CD8-positive, alpha-beta T cell (primary cell): ENCODE measurements at regions of chr1 and their contacts with region 1.

Region 1: GRCh38 chr1:31663622-31664452 is 19.2 kb upstream of the PEF1 start:
- DNase-seq: peak; percentile 18 to 79 (median 59)
- ATAC-seq: peak; percentile 72
- H3K4me3 ChIP-seq: no peak overlapping the region
- H3K4me3 Mint-ChIP-seq: no peak overlapping the region
- H3K27ac ChIP-seq: no peak overlapping the region
- H3K27ac Mint-ChIP-seq: no peak overlapping the region
- H3K4me1 ChIP-seq: no peaks in the 10 kb centered on the region
- H3K4me1 Mint-ChIP-seq: no peaks in the 10 kb centered on the region
- H3K27me3 ChIP-seq: no peaks in the 10 kb centered on the region
- H3K27me3 Mint-ChIP-seq: peaks cover 3% of the 10 kb centered on the region
- CTCF ChIP-seq: peak; percentile 70

Region 2: GRCh38 chr1:30579580-30579979 is 1084.3 kb before region 1 on chr1:
- CTCF ChIA-PET with region 1: no interaction called
- POLR2A ChIA-PET with region 1: no interaction called
- intact Hi-C with region 1: no loop called
- DNase-seq: no peak
- ATAC-seq: no peak
- H3K4me3 ChIP-seq: no peak overlapping the region
- H3K4me3 Mint-ChIP-seq: no peak overlapping the region
- H3K27ac ChIP-seq: no peak overlapping the region
- H3K27ac Mint-ChIP-seq: no peak overlapping the region
- H3K4me1 ChIP-seq: no peaks in the 10 kb centered on the region
- H3K4me1 Mint-ChIP-seq: no peaks in the 10 kb centered on the region
- H3K27me3 ChIP-seq: no peaks in the 10 kb centered on the region
- H3K27me3 Mint-ChIP-seq: peaks cover 10% of the 10 kb centered on the region
- CTCF ChIP-seq: no peak

Region 3: DNA sequence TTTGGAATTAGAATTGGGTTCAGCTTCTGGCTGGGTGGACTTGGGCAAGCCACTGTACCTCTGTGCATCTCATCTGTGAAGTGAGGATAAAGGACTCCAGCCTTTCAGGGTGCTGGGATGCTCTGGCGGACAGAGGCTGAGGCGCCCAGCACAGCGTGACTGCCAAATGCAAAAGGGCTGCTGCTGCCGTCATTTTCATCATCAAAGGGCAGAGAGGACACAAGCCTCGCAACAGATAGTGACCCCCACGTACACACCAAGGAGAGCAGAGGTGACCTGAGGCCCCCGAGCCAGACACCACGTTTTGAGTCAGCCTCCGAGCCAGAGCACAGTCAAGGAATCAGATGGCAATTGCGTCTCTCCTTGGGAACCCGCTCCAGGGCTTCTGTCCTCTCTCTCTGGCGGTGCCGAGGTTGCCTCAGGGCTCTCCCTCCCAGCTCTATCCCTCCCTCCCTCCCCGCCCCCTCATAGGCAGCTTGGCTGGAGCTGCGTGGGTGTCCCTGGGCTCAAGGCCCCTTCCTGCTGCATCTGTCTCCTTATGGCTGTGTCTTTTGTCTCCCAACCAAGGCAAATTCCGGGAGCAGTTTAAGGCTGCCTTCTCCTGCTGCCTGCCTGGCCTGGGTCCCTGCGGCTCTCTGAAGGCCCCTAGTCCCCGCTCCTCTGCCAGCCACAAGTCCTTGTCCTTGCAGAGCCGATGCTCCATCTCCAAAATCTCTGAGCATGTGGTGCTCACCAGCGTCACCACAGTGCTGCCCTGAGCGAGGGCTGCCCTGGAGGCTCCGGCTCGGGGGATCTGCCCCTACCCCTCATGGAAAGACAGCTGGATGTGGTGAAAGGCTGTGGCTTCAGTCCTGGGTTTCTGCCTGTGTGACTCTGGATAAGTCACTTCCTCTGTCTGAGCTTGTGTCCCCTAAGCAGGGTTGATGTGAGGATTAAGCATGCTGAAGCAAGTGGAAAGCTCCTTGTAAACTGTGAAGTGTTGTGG is 37.3 kb before region 1 on chr1:
- CTCF ChIA-PET with region 1: no interaction called
- POLR2A ChIA-PET with region 1: no interaction called
- intact Hi-C with region 1: no loop called
- DNase-seq: no peak
- ATAC-seq: no peak
- H3K4me3 ChIP-seq: no peak overlapping the region
- H3K4me3 Mint-ChIP-seq: no peak overlapping the region
- H3K27ac ChIP-seq: no peak overlapping the region
- H3K27ac Mint-ChIP-seq: no peak overlapping the region
- H3K4me1 ChIP-seq: no peaks in the 10 kb centered on the region
- H3K4me1 Mint-ChIP-seq: no peaks in the 10 kb centered on the region
- H3K27me3 ChIP-seq: no peaks in the 10 kb centered on the region
- H3K27me3 Mint-ChIP-seq: no peaks in the 10 kb centered on the region
- CTCF ChIP-seq: no peak

Region 4: DNA sequence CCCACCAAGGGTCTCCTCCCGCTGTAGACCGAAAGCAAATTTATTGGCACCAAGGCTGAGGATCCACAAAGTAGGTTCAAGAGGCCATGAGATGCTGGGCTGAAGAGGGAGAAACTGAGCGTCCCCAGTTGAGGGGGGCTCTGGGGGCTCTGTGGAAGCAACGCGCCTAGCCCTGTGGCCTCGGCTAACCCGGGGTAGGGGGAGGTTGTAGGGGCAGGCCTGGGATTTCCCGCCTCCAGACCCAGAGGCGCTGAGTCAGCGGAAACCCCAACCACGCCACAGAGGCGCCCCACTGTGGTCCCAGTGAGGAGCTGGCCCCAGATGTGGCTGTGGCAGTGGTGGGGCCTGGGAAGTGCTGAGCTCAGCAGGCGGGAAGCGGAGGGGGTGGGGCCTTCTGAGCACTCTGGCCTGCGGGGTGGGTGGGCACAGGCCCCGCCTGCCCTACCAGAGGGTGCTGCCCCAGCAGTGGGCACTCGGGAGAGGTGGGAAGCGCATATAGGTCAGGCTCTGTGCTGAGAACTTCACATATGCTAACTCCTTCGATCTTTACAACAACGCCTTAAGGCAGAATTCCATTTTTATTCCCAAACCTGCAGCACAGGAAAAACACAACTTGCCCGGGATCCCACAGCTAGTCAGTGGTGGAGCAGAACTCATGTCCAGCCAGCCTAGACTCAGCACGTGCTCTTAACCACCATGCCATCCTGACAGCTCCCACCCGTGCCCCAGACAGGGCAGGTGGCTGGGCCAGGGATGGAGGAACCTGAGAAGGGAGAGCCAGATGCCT is 41.4 kb after region 1 on chr1:
- CTCF ChIA-PET with region 1: interaction called, 8 read pairs
- POLR2A ChIA-PET with region 1: no interaction called
- intact Hi-C with region 1: loop called in 1 of 2 experiments (anchors 1 kb)
- DNase-seq: peak; percentile 22 to 81 (median 60)
- ATAC-seq: peak; percentile 83
- H3K4me3 ChIP-seq: no peak overlapping the region
- H3K4me3 Mint-ChIP-seq: peak overlapping the region; percentile 32
- H3K27ac ChIP-seq: no peak overlapping the region
- H3K27ac Mint-ChIP-seq: no peak overlapping the region
- H3K4me1 ChIP-seq: peaks cover 22% of the 10 kb centered on the region
- H3K4me1 Mint-ChIP-seq: peaks cover 38% of the 10 kb centered on the region
- H3K27me3 ChIP-seq: no peaks in the 10 kb centered on the region
- H3K27me3 Mint-ChIP-seq: peaks cover 41% of the 10 kb centered on the region
- CTCF ChIP-seq: no peak

Region 5: DNA sequence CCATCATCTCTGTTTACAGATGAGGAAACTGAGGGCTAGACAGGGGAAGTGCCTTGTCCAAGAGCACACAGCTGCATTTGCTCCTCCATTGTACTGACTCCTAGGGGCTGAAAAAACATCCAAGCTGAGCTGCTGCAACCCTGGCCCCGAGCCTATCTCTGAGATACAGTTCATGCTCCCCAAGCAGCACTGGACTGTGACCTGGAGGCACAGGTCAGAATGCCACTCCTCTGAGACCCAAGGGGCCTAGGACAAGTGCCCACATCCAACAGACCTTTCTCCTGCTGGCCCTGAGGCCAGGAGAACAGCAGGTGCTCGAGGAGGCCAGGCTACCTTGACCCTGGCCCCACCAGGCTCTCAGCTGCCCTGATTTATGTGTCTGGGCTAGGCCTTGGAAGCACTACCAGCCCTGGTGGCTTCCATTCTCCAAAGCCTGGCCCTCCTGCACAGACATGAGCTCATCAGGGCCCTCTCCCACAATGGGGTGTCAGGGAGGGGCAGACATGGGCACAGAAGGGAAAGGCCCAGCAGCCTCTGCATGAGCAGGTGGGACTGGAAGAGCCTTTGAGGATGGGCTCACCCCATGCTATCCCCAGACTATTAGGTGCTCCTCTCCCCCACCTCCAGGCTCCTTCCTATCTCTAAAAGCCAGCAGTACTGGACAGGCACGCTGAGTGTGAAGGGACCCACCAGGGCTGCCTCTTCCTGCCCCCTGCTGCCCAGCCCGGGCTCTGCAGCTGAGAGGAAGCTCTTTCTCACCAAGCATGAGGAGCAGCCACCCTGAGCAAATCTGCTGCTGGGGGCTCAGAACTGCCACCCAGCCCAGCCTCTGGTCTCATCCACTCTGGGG is 81.5 kb after region 1 on chr1:
- CTCF ChIA-PET with region 1: interaction called, 12 read pairs
- POLR2A ChIA-PET with region 1: no interaction called
- intact Hi-C with region 1: no loop called
- DNase-seq: peak in 6 of 9 experiments; percentile 16 to 58 (median 49)
- ATAC-seq: peak; percentile 71
- H3K4me3 ChIP-seq: no peak overlapping the region
- H3K4me3 Mint-ChIP-seq: no peak overlapping the region
- H3K27ac ChIP-seq: no peak overlapping the region
- H3K27ac Mint-ChIP-seq: no peak overlapping the region
- H3K4me1 ChIP-seq: peaks cover 12% of the 10 kb centered on the region
- H3K4me1 Mint-ChIP-seq: peaks cover 14% of the 10 kb centered on the region
- H3K27me3 ChIP-seq: no peaks in the 10 kb centered on the region
- H3K27me3 Mint-ChIP-seq: no peaks in the 10 kb centered on the region
- CTCF ChIP-seq: peak; percentile 40

Region 6: DNA sequence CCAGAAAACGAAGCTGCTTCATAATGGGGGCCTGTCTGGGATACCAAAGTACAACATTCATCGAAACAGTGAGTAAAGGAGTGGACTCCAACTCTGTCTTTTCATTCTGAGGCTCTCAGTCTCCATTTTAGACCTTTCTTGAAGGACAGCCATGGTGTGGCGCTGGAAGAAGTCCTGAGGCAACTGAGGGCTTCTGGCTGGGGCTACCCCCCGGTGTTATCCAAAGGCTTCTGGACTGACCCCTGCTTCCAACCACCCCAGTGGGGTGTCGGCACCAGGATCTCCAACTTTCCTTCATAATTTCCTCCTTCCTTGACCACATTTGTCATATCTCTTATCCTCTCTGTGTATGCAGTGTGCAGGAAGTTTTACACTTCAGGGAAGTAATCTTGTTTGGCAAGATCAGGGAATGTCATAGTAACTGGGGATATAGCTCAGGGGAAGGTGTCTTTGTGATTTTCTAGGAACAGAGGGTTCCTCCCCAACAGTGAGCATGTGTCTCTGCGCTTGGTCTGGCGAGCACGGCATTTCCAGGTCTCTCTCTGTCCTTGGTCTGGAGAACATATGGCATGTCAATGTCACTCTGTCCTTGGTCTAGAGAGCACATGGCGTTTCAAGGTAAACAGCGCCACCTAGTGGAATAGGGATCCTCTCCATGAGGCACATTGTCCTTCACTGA is 749.8 kb after region 1 on chr1:
- CTCF ChIA-PET with region 1: no interaction called
- POLR2A ChIA-PET with region 1: no interaction called
- intact Hi-C with region 1: loop called (anchors 5 kb)
- DNase-seq: peak; percentile 32 to 88 (median 75)
- ATAC-seq: peak; percentile 80
- H3K4me3 ChIP-seq: no peak overlapping the region
- H3K4me3 Mint-ChIP-seq: no peak overlapping the region
- H3K27ac ChIP-seq: no peak overlapping the region
- H3K27ac Mint-ChIP-seq: no peak overlapping the region
- H3K4me1 ChIP-seq: no peaks in the 10 kb centered on the region
- H3K4me1 Mint-ChIP-seq: peaks cover 3% of the 10 kb centered on the region
- H3K27me3 ChIP-seq: no peaks in the 10 kb centered on the region
- H3K27me3 Mint-ChIP-seq: peaks cover 10% of the 10 kb centered on the region
- CTCF ChIP-seq: peak; percentile 89